ENCODE measurements at regions of chr16 and their contacts with region 1.

Region 1: DNA sequence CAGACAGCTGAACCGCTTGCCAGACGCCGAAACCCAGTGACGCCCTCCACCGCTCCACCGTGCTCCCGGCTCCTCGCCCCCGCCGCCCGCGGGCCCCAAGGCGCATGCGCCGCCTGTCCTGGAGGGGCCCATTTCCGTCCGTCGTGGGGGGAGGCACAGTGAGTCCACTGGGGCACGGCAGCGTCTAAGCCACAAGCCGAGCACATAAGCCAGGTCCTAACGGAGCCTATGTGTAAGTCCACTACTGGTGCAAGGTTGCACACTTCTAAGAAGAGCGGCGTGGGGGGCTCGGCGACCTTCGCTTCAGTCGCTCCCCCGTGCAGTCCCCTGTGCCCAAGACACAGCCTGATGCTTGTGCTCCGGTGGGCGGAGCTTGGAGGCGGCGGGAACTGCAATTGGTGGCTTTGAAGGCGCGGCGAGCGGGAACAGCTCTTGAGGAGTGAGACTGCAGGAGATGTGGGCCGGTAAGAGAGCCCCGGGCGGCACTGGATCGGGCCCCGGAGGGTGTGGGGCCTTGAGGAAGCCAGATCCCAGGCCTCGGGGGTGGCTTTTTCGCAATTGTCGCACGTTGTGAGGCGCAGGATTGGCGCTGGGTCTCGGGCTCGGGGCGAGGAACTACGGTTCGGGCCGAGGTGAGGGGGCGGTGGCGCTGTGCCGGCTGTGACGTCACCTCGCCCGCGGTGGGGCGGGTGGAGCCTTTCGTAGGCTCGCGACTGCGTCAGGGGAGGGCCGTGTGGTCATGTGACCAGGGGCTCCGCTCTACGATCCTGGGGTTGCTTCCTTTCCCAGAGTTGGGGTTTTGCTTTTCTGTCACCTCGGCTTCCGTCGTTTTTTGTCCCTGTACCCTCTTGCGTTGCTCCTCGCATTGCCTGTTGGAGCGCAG is at the starts of genes CENPN and CMC2:
- DNase-seq: peak; percentile 99
- H3K4me3 ChIP-seq: peak within 1 kb of the TSS; percentile 95
- H3K27ac ChIP-seq: peak within 1 kb of the TSS; percentile 98
- H3K27me3 ChIP-seq: no peaks in the 10 kb centered on the region
- CTCF ChIP-seq: peak; percentile 4; the same call in 1 of the 2 replicates
- polyA plus RNA-seq, gene CENPN: 16.2 and 23.1 TPM in 2 replicates
- polyA plus RNA-seq, gene CMC2: 74.7 and 85.2 TPM in 2 replicates

Region 2: DNA sequence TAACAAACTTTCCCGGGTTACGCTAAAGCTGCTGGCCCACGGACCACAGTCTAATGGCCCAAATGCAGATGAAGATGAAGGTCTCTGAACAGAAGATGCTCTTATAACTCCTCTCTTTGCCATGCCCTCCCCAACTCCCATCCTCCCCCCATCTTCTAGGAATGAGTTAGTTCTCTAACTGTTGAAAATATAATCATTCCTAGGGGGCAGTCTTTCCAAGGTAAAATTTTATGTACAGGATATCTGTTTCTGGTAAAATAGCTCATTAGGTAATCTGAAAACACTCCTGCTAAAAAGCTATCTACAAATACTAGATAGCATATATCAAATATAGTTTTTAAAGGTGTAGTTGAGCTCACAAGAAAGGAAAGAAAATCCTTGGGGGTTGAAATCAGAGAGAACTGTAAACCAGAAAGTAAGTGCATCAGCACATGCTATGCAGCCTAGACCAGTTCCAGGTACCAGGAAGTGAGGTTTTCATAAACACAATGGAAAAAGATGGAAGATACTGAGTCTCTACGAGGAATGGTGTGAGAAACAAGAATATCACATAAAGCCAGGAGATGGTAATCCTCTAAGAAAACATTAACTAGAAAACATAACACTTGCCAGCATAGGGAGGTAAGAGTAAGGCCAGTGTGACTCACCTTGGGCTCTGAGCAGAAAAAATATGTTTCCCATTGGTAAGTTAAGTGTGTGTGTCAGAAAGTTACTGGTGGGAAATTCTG is 38.5 kb before region 1 on chr16:
- CTCF ChIA-PET with region 1: interaction called, 12 read pairs
- POLR2A ChIA-PET with region 1: no interaction called
- DNase-seq: no peak
- H3K4me3 ChIP-seq: no peak overlapping the region
- H3K27ac ChIP-seq: no peak overlapping the region
- H3K27me3 ChIP-seq: no peaks in the 10 kb centered on the region
- CTCF ChIP-seq: no peak

Region 3: DNA sequence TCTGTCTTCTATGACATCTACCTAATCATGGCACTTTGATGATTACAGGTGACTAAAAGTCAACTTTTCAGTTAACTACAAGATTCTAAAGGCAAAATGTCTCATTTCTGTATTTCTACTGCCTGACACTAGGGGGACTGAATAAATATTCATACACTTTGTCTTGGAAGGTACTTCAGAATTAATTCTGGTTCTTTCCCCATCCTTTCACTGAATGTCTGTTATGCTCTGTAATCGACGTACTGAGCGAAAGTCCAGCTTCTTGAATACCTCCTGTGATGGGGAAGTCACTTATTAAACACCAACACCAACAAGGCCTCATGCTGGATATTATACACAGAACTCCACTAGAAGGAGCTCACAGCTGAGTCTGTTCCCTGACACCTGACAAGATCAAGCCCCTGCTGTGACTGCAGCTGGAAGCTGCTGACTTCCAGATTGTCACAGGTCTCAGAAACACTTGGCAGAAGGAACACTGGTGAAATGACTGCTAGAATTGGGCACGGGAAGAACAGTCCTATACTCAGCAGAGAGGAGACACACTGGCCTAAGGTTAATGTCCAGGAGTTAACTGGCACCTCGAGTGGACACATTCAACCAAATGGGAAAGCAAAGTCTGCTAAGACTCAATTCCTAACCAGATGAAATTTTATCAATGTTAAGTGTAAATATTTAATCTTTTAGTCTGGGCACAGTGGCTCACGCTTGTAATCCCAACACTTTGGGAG is 32.2 kb before region 1 on chr16:
- CTCF ChIA-PET with region 1: interaction called, 12 read pairs
- POLR2A ChIA-PET with region 1: no interaction called
- DNase-seq: no peak
- H3K4me3 ChIP-seq: no peak overlapping the region
- H3K27ac ChIP-seq: no peak overlapping the region
- H3K27me3 ChIP-seq: no peaks in the 10 kb centered on the region
- CTCF ChIP-seq: peak; percentile 54

Region 4: GRCh38 chr16:81018496-81018895 is 11.4 kb after region 1 on chr16:
- CTCF ChIA-PET with region 1: interaction called, 13 read pairs
- POLR2A ChIA-PET with region 1: interaction called, 4 read pairs
- DNase-seq: no peak
- H3K4me3 ChIP-seq: no peak overlapping the region
- H3K27ac ChIP-seq: no peak overlapping the region
- H3K27me3 ChIP-seq: no peaks in the 10 kb centered on the region
- CTCF ChIP-seq: no peak

Measured in AG04450 (cell line).